ENCODE measurements at regions of chr17 and their contacts with region 1.

Region 1: DNA sequence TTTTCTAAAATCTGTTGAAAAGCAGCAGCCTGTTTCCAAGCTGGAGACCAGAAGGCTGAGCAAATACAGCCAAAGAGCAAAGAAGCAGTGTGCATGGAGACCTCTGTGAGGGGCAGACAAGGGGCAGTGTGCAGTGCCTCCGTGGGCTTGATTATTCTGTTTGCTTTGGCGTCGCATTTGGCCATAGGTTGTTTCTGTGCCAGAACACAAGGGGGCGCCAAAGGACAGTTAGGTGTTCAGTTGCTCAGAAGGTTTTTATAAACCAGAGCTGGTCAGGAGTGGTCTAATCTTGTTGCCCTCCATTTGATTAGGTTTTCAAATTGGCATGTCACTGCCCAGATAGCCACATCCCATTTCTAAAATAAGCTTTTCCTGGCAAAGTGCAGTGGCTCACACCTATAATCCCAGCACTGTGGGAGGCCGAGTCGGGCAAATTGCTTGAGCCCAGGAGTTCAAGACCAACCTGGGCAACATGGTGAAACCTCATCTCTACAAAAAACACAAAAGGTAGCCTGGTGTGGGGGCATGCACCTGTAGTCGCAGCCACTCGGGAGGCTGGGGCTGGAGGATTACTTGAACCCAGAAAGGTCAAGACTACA is 10.6 kb downstream of the MYH3 start:
- DNase-seq: peak; percentile 92
- H3K4me3 Mint-ChIP-seq: no peak overlapping the region
- H3K27ac Mint-ChIP-seq: no peak overlapping the region
- H3K4me1 Mint-ChIP-seq: no peaks in the 10 kb centered on the region
- H3K27me3 Mint-ChIP-seq: no peaks in the 10 kb centered on the region

Region 2: DNA sequence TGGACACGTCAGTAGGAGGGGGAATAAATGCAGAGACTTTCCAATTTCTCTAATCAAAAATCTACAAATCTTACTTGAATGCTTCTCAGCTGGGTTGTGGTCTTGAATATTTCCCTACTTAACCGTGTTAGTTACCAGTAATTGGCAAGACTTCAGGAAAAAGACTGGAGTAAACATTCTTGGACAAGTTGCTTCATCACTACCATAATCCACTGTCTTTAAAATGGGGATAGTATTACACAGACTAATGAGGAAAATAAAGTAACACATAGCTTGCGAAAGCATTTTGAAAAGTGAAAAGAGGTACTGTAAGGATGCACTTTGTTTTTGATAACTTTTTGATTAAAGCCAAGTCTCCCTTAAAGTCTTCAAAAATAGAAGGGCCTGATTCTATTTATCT is 146.5 kb before region 1 on chr17:
- intact Hi-C with region 1: no loop called
- DNase-seq: no peak
- H3K4me3 Mint-ChIP-seq: no peak overlapping the region
- H3K27ac Mint-ChIP-seq: no peak overlapping the region
- H3K4me1 Mint-ChIP-seq: no peaks in the 10 kb centered on the region
- H3K27me3 Mint-ChIP-seq: no peaks in the 10 kb centered on the region

Region 3: GRCh38 chr17:10683853-10684252 is 37.4 kb after region 1 on chr17:
- intact Hi-C with region 1: loop called (anchors 1 kb)
- DNase-seq: no peak
- H3K4me3 Mint-ChIP-seq: no peak overlapping the region
- H3K27ac Mint-ChIP-seq: no peak overlapping the region
- H3K4me1 Mint-ChIP-seq: peaks cover 7% of the 10 kb centered on the region
- H3K27me3 Mint-ChIP-seq: no peaks in the 10 kb centered on the region

Region 4: DNA sequence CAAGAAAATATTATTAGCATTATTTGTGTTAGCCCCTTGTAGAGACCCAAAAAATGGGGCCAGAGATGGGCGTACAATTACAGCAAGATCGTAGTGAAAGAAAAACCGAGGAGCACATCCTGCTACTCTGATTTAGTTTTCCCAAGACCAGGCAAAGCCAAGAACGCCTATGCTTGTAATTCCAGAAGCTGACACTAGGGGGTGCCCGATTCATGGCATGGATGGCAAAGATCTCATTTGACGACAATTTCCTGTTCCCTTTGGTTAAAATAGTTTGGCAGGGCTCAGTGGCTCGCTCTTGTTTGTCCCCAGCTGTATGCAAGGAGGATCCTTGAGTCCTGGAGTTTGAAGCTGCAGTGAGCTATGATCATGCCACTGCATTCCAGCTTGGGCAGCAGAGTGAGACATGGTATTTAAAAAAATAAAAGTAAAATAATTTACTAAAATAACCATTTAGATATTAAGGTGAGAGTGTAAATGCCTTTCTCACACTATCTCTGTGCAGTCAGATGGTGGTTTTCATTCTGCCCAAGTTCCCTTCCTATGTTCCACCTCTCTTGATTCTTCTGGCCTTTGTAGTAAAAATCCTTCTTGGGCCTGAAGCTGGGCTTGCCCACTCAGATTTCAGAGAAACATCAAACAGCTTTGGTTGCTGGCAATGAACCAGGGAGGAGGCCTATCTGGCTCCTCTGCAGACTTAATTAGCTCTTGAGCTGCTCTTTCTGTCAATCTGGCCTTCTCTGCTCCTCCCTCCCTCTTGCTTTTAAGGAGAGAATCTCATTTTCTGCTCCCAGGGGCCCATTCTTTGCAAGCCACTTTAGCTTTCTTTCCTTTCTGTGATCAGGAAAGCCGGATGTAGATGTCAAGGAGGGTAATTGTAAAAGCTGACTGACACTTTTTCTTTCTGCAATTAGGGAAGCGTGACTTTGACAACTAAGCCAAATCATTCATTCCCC is 126.2 kb after region 1 on chr17:
- intact Hi-C with region 1: no loop called
- DNase-seq: peak; percentile 75
- H3K4me3 Mint-ChIP-seq: no peak overlapping the region
- H3K27ac Mint-ChIP-seq: no peak overlapping the region
- H3K4me1 Mint-ChIP-seq: no peaks in the 10 kb centered on the region
- H3K27me3 Mint-ChIP-seq: no peaks in the 10 kb centered on the region